PC-3 (cell line): ENCODE measurements at regions of chr11 and their contacts with region 1.

Region 1: DNA sequence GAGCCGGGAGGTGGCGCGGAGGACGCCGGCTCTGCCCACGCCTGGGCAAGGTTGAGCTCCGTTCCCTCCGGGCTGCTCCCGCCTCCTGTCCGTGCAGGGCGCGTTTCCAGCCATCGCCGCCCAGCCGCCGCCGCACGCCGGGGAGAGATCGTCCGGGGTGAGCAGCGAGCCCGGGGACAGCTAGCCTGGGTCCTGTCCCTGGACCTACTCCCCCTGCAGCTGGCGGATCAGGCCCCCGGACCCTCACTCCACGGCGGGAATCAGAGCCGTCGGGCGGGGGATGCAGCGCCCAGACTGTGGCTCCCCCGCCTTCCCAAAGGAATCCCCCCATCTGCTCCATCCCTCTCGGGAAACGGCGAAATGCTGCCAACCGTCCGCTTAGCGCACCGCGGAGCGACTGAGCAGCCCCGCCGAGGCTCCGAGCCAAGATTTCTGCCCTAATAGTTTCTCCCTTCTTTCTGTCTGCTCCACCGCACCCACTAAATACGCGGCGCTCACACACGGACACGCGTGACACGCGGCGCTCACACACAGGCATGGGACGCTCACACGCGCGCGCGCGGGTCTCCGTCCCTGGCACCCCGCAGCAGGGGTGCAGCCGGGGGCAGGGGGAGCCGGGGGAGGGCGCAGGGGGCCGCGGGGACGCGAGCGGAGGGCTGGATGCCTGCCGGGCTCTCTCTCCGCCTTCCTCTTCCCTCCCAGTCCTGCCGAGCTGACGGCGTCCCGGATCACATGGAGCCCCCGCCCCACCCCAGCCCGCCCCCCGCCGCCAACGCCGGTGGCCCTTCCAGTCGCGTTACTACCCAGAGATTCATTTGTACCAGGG is at the start of gene KCNJ5:
- DNase-seq: peak; percentile 51
- ATAC-seq: peak; percentile 72
- H3K4me3 ChIP-seq: peak within 1 kb of the TSS; percentile 77
- H3K27ac ChIP-seq: no peak within 1 kb of the TSS
- H3K4me1 ChIP-seq: peaks cover 5% of the 10 kb centered on the region; the same call in 1 of the 2 replicates
- H3K27me3 ChIP-seq: 0 out of 2 replicates have a peak, but pooled peaks cover 2% of the 10 kb centered on the region
- CTCF ChIP-seq: 0 out of 2 replicates have a peak, but pooled peaks have one; percentile 10
- total RNA-seq, gene KCNJ5: not detected in 2 replicates

Region 2: DNA sequence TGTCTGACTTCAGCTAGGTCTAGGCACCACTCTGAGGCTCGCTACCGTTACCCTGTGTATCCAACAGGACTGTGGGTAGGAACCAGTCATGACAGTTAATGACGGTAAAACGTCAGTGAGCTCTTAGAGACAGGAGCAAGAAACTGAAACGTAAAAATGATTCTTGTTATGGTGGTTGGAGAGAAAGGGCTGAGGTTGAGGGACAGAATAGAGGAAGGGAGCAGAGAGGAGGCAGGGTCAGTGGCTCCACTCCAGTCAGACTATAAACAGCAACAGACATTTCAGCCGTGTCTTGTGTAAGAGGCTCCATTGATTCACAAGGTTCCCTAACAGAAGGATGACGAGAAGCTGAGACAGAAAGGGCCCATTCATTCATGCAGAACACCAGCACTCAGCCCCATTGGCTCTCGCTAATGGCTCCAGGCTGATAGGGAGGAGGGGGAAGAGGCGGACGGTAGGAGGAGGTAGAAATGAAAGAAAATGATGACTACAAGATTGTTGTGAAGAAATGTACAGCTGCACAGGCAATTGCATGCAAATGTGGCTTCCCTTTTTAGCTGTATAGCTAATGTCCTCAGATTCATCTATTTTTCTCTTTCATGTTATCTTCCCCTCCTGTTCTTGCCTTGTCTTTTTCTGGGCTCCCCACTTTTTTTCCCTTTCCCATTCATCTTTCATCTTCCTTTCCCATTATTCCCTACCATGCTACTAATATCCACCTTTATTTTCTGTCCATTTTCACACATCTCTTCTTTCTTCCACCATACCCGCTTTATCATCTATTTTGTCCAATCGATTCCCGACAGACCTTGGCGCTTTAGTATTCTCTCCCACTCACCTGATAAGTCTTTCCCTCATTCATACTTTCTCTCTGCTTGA is 337.7 kb before region 1 on chr11:
- CTCF ChIA-PET with region 1: no interaction called
- POLR2A ChIA-PET with region 1: no interaction called
- intact Hi-C with region 1: no loop called
- DNase-seq: no peak
- ATAC-seq: no peak
- H3K4me3 ChIP-seq: no peak overlapping the region
- H3K27ac ChIP-seq: no peak overlapping the region
- H3K4me1 ChIP-seq: no peaks in the 10 kb centered on the region
- H3K27me3 ChIP-seq: no peaks in the 10 kb centered on the region
- CTCF ChIP-seq: no peak

Region 3: GRCh38 chr11:128859563-128860441 is 31.0 kb before region 1 on chr11:
- CTCF ChIA-PET with region 1: no interaction called
- POLR2A ChIA-PET with region 1: no interaction called
- intact Hi-C with region 1: no loop called
- DNase-seq: peak; percentile 73
- ATAC-seq: peak; percentile 76
- H3K4me3 ChIP-seq: no peak overlapping the region
- H3K27ac ChIP-seq: no peak overlapping the region
- H3K4me1 ChIP-seq: peaks cover 14% of the 10 kb centered on the region
- H3K27me3 ChIP-seq: peaks cover 5% of the 10 kb centered on the region; the same call in 1 of the 2 replicates
- CTCF ChIP-seq: peak; percentile 96

Region 4: GRCh38 chr11:128956401-128957201 is 65.8 kb after region 1 on chr11:
- CTCF ChIA-PET with region 1: interaction called, 41 read pairs
- POLR2A ChIA-PET with region 1: no interaction called
- intact Hi-C with region 1: no loop called
- DNase-seq: peak; percentile 95
- ATAC-seq: peak; percentile 93
- H3K4me3 ChIP-seq: no peak overlapping the region
- H3K27ac ChIP-seq: no peak overlapping the region
- H3K4me1 ChIP-seq: no peaks in the 10 kb centered on the region
- H3K27me3 ChIP-seq: no peaks in the 10 kb centered on the region
- CTCF ChIP-seq: peak; percentile 94